Activated CD4-positive, alpha-beta T cell treated with anti-CD3 and anti-CD28 coated beads for 36 hours (primary cell): ENCODE measurements at regions of chr1 and their contacts with region 1.

Region 1: GRCh38 chr1:224113918-224114786 is at the start of gene FBXO28:
- DNase-seq: peak; percentile 98
- ATAC-seq: peak; percentile 99
- H3K4me3 Mint-ChIP-seq: peak within 1 kb of the TSS; percentile 85
- H3K27ac Mint-ChIP-seq: peak within 1 kb of the TSS; percentile 96
- H3K4me1 Mint-ChIP-seq: peaks cover 25% of the 10 kb centered on the region
- H3K27me3 Mint-ChIP-seq: no peaks in the 10 kb centered on the region
- total RNA-seq, gene FBXO28: 17.1 to 19.7 TPM

Region 2: GRCh38 chr1:223695941-223696340 is 418.2 kb before region 1 on chr1:
- CTCF ChIA-PET with region 1: no interaction called
- POLR2A ChIA-PET with region 1: no interaction called
- intact Hi-C with region 1: loop called in 1 of 2 experiments (anchors 5 kb)
- DNase-seq: no peak
- ATAC-seq: no peak
- H3K4me3 Mint-ChIP-seq: no peak overlapping the region
- H3K27ac Mint-ChIP-seq: no peak overlapping the region
- H3K4me1 Mint-ChIP-seq: peaks cover 9% of the 10 kb centered on the region
- H3K27me3 Mint-ChIP-seq: peaks cover 4% of the 10 kb centered on the region

Region 3: DNA sequence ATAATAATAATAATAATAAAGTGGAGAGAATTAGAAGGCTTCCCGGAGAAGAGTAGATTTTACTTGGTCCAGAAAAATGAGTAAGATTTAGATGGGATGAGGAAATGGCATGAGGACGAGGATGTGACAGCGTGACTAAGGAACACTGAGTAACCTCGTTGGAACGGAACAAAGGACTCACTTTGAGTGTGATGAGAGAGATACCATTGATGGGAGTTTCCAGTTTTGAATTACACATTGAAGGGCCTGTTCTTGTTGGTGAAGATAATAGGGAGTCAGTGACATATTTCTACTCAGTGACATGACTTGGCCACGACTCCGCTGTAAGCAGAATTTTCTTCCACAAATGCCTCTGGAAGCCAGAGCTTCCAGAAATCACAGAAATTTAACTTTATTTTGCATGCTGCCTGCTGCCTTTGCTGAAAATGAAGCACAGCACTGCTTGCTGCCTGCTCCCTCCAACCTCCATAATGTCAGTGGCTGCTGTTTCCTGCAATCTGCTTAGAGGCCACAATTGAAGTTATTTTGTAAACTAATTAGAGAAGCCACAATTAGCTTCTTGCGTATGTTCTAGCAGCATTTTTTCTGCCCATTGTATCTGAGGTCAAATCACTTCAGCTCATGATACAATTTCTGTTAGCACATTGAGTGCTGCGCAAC is 33.9 kb before region 1 on chr1:
- CTCF ChIA-PET with region 1: no interaction called
- POLR2A ChIA-PET with region 1: no interaction called
- intact Hi-C with region 1: no loop called
- DNase-seq: no peak
- ATAC-seq: no peak
- H3K4me3 Mint-ChIP-seq: no peak overlapping the region
- H3K27ac Mint-ChIP-seq: no peak overlapping the region
- H3K4me1 Mint-ChIP-seq: peaks cover 2% of the 10 kb centered on the region
- H3K27me3 Mint-ChIP-seq: peaks cover 5% of the 10 kb centered on the region

Region 4: GRCh38 chr1:224124220-224124619 is 10.1 kb after region 1 on chr1:
- CTCF ChIA-PET with region 1: interaction called, 19 read pairs
- POLR2A ChIA-PET with region 1: no interaction called
- intact Hi-C with region 1: no loop called
- DNase-seq: no peak
- ATAC-seq: no peak
- H3K4me3 Mint-ChIP-seq: no peak overlapping the region
- H3K27ac Mint-ChIP-seq: no peak overlapping the region
- H3K4me1 Mint-ChIP-seq: peaks cover 27% of the 10 kb centered on the region
- H3K27me3 Mint-ChIP-seq: no peaks in the 10 kb centered on the region

Region 5: GRCh38 chr1:224356685-224357625 is 242.8 kb after region 1 on chr1 and contains the start of gene CNIH4:
- CTCF ChIA-PET with region 1: interaction called, 10 read pairs
- POLR2A ChIA-PET with region 1: no interaction called
- intact Hi-C with region 1: loop called (anchors 1 kb)
- DNase-seq: peak; percentile 95
- ATAC-seq: peak; percentile 98
- H3K4me3 Mint-ChIP-seq: peak within 1 kb of the TSS; percentile 80
- H3K27ac Mint-ChIP-seq: peak within 1 kb of the TSS; percentile 89
- H3K4me1 Mint-ChIP-seq: peaks cover 30% of the 10 kb centered on the region
- H3K27me3 Mint-ChIP-seq: no peaks in the 10 kb centered on the region
- total RNA-seq, gene CNIH4: 29.9 to 49.6 TPM

Region 6: GRCh38 chr1:224454397-224455066 is 340.4 kb after region 1 on chr1:
- CTCF ChIA-PET with region 1: interaction called, 30 read pairs
- POLR2A ChIA-PET with region 1: interaction called, 12 read pairs
- intact Hi-C with region 1: loop called (anchors 1 kb)
- DNase-seq: no peak
- ATAC-seq: peak; percentile 37
- H3K4me3 Mint-ChIP-seq: no peak overlapping the region
- H3K27ac Mint-ChIP-seq: no peak overlapping the region
- H3K4me1 Mint-ChIP-seq: peaks cover 19% of the 10 kb centered on the region
- H3K27me3 Mint-ChIP-seq: no peaks in the 10 kb centered on the region